Activated CD8-positive, alpha-beta T cell treated with anti-CD3 and anti-CD28 coated beads for 36 hours (primary cell): ENCODE measurements at regions of chr4 and their contacts with region 1.

Region 1: DNA sequence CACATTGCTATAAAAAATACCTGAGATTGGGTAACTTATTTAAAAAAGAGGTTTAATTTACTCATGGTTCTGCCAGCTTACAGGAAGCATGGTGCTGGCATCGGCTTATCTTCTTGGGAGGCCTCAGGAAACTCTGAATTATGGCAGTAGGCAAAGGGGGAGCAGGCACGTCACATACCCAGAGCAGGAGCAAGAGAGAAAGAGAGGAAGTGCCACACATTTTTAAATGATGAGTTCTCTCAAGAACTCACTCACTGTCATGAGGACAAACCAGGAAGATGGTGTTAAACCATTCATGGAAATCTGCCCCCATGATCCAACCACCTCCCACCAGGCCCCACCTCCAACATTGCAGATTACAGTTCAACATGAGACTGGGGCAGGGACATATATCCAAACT is 10.0 kb upstream of the AFF1 start:
- DNase-seq: no peak
- ATAC-seq: no peak
- H3K4me3 Mint-ChIP-seq: no peak overlapping the region
- H3K27ac Mint-ChIP-seq: no peak overlapping the region
- H3K4me1 Mint-ChIP-seq: peaks cover 20% of the 10 kb centered on the region
- H3K27me3 Mint-ChIP-seq: no peaks in the 10 kb centered on the region
- CTCF ChIP-seq: no peak

Region 2: DNA sequence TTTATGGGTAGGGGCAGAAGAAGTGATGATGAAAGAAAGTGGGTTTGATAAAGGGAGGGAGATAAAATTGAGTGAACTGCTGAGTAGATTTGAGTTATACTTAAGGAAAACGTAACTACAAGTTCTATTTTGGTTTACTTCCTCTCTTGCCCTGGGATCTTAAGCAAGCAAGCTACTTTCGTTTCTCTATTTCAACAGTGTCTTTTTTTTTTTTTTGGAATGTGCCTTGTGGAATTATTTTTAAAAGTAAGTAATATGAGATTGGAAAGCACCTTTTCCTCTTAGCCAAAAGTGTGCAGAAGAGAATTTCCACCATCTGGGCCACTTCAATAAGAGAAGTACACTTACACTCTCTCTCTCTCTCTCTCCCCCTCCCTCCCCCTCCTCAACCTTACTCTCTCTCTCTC is 16.6 kb before region 1 on chr4:
- CTCF ChIA-PET with region 1: interaction called, 15 read pairs
- POLR2A ChIA-PET with region 1: interaction called, 3 read pairs
- intact Hi-C with region 1: no loop called
- DNase-seq: no peak
- ATAC-seq: no peak
- H3K4me3 Mint-ChIP-seq: no peak overlapping the region
- H3K27ac Mint-ChIP-seq: no peak overlapping the region
- H3K4me1 Mint-ChIP-seq: peaks cover 16% of the 10 kb centered on the region
- H3K27me3 Mint-ChIP-seq: peaks cover 4% of the 10 kb centered on the region
- CTCF ChIP-seq: no peak

Region 3: DNA sequence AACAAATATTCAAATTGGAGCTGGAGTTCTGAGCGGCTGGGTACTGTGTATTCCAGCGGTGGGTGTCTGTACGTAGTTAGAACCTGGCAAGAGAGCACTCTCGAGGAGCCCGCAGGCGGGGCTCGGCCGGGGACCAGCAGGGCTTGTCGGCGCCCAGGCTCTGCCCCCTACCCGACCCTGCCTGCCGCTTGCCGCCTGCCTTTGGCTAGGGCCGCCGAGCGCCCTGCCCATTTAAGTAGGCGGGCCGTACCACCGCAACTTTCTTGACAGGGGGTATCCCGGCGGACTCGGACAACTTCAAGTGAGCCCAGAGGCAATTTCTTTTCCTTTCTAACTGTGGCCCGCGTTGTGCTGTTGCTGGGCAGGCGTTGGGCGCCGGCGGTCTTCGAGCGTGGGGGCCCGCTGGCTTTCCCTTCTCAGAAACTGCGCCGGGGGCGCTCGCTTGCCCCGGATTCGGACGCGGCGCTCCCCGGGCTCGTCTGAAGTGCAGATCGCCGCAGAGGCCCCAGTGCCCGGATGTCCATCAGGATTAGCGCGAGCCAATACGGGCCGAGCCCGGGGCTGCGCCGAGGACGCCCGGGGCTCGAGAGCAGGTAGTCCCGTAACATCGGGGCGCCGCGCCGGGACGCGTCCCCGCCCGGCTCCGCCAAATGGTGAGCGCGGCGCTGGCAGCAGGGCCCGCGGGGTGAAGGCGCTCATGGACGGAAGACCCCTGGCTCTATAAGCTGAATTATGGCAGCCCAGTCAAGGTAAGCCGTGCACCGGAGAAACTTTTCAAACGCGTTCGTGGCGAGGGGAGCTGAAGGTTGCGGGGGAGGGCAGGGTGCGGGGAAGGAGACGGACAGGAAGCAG is 82.1 kb after region 1 on chr4:
- CTCF ChIA-PET with region 1: interaction called, 28 read pairs
- POLR2A ChIA-PET with region 1: interaction called, 6 read pairs
- intact Hi-C with region 1: no loop called
- DNase-seq: peak; percentile 90
- ATAC-seq: peak; percentile 84
- H3K4me3 Mint-ChIP-seq: peak overlapping the region; percentile 90
- H3K27ac Mint-ChIP-seq: peak overlapping the region; percentile 93
- H3K4me1 Mint-ChIP-seq: peaks cover 47% of the 10 kb centered on the region
- H3K27me3 Mint-ChIP-seq: no peaks in the 10 kb centered on the region
- CTCF ChIP-seq: peak; percentile 49

Region 4: DNA sequence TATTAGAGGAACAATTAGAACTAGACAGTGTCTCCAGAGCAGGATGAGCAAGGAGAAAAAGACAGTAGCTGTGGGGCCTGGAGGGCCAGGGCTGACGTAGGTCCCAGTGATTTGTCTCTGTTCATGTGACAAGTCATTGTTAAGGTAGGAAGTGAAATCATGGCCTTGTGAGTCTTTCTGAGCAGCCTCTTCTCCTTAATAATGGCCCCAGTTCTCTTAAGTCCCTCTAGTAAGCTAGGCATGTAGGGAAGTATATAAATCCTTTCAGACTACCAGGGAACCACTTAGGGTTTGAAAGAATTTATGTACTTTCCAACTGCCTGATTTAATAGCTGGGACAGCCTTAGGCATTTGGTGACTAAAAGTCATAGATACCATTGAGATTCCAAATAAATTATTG is 162.6 kb after region 1 on chr4:
- CTCF ChIA-PET with region 1: interaction called, 140 read pairs
- POLR2A ChIA-PET with region 1: interaction called, 4 read pairs
- intact Hi-C with region 1: no loop called
- DNase-seq: no peak
- ATAC-seq: no peak
- H3K4me3 Mint-ChIP-seq: no peak overlapping the region
- H3K27ac Mint-ChIP-seq: peak overlapping the region; percentile 22
- H3K4me1 Mint-ChIP-seq: peaks cover 11% of the 10 kb centered on the region
- H3K27me3 Mint-ChIP-seq: no peaks in the 10 kb centered on the region
- CTCF ChIP-seq: no peak

Region 5: GRCh38 chr4:87103691-87104187 is 178.9 kb after region 1 on chr4:
- CTCF ChIA-PET with region 1: interaction called, 24 read pairs
- POLR2A ChIA-PET with region 1: no interaction called
- intact Hi-C with region 1: no loop called
- DNase-seq: no peak
- ATAC-seq: peak; percentile 68
- H3K4me3 Mint-ChIP-seq: no peak overlapping the region
- H3K27ac Mint-ChIP-seq: peak overlapping the region; percentile 35
- H3K4me1 Mint-ChIP-seq: peaks cover 34% of the 10 kb centered on the region
- H3K27me3 Mint-ChIP-seq: no peaks in the 10 kb centered on the region
- CTCF ChIP-seq: no peak

Region 6: DNA sequence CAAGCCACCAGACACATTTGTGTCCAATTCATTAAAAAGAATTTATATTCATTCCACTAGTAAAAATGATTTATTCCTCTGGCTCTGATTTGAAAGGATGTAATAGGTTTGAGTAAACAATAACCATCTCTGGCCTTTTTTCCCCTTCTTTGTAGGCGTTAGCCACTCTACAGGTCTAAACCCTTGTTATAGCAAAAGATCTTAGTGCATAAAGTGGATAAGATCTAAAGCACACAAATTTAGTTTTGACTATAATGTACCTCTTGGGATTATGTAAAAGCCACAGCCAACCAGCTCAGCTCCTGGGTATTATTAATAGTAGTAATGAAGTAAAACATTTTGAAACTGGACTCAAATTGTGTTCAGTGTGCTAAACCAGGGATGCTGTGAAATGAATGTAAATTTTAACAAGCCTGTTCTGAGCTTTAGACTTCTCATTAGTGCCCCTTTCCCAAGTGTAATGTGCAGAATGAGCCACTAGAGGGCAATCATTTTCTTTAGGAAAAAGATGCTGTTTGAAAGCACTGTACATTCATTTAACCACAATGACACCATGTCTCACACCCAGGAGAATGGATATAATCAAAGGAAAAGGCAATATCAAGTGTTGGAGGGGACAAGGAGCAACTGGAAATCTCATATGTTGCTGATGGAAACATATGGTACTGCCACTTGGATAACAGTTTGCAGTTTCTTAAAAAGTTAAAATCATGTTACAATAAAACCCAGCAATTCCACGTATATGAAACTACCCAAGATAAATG is 225.9 kb after region 1 on chr4:
- CTCF ChIA-PET with region 1: interaction called, 24 read pairs
- POLR2A ChIA-PET with region 1: no interaction called
- intact Hi-C with region 1: no loop called
- DNase-seq: peak; percentile 59
- ATAC-seq: peak; percentile 88
- H3K4me3 Mint-ChIP-seq: no peak overlapping the region
- H3K27ac Mint-ChIP-seq: no peak overlapping the region
- H3K4me1 Mint-ChIP-seq: no peaks in the 10 kb centered on the region
- H3K27me3 Mint-ChIP-seq: no peaks in the 10 kb centered on the region
- CTCF ChIP-seq: peak; percentile 94